GM10248 (cell line): ENCODE measurements at regions of chr2 and their contacts with region 1.

Region 1: DNA sequence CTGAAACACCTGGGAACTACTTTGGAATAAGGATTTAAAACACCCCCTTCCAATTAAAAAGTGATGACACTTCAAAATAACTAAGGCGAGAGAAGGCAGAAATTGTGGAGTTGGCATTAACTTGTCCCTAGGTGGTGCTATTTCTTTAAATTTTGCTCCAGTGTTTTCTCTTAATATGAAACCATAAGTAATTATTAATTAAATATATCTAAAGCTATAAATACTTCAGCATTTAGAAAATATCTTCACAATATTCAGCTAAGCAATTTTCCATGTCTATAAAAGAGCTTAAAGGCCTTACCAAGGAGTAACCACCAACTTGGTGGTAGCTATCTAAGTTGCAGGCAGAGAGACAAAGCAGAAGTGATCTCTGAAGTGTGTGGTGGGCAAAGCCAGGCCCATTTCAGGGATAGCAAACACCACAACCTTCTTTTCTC is 186.8 kb upstream of the PGAP1 start:
- DNase-seq: peak; percentile 48
- CTCF ChIP-seq: peak; percentile 49

Region 2: DNA sequence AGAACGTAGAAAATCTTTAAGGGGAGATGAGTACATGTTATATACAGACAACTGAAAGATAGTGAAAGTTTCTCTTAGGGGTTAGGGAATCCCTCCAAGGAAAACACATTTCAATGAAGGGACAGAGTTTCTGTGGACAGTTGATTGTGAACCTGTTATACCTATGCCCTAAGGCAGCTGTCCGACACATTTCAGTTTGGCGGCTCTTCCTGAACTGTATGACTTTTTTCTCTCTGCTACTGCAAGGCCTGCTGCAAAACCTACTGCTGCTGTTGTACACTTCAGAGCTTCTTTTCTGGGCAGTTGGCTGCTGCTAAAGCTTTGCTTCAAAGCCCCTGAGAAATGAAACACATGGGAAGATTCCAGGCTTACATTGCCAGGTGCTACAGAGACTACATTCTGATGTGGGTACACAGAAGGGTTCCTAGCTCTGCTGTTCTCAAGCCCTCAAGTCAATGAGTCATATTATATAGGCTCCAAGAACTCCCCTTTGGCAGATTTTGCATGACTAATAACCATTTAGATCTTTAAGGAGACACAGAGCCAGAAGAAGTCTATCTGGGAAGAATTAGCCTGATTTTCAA is 174.0 kb before region 1 on chr2:
- CTCF ChIA-PET with region 1: no interaction called
- POLR2A ChIA-PET with region 1: no interaction called
- DNase-seq: no peak
- CTCF ChIP-seq: no peak

Region 3: DNA sequence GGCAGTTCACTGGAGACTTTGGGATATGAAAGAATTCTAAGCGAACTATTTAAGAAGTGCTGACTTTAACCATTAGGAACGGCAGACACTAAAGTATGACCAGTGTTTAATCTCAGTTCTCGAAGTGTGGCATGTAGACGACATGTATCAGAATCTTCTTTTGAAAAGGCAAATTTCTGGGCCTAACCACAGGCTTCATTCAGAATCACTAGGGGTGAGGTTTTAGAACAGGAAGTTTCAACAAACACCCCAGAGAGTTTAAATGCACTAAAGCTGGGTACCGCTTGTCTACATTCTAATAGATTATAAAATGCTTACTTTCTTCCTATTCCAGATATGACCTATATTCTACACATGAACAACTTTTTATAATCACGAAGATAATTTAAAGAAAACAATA is 17.0 kb after region 1 on chr2:
- CTCF ChIA-PET with region 1: interaction called, 39 read pairs
- POLR2A ChIA-PET with region 1: no interaction called
- DNase-seq: peak; percentile 64
- CTCF ChIP-seq: no peak

Region 4: GRCh38 chr2:197152451-197153228 is 39.3 kb after region 1 on chr2:
- CTCF ChIA-PET with region 1: interaction called, 15 read pairs
- POLR2A ChIA-PET with region 1: no interaction called
- DNase-seq: peak; percentile 45
- CTCF ChIP-seq: peak; percentile 7

Region 5: GRCh38 chr2:197174539-197175094 is 61.3 kb after region 1 on chr2:
- CTCF ChIA-PET with region 1: interaction called, 81 read pairs
- POLR2A ChIA-PET with region 1: no interaction called
- DNase-seq: no peak
- CTCF ChIP-seq: no peak

Region 6: GRCh38 chr2:197310271-197310985 is 197.1 kb after region 1 on chr2 and contains the start of gene ANKRD44:
- CTCF ChIA-PET with region 1: interaction called, 28 read pairs
- POLR2A ChIA-PET with region 1: no interaction called
- DNase-seq: peak; percentile 88
- CTCF ChIP-seq: peak; percentile 77

Region 7: GRCh38 chr2:197383823-197384222 is 270.5 kb after region 1 on chr2:
- CTCF ChIA-PET with region 1: interaction called, 18 read pairs
- POLR2A ChIA-PET with region 1: no interaction called
- DNase-seq: no peak
- CTCF ChIP-seq: no peak